WTC11 (cell line): ENCODE measurements at regions of chr20 and their contacts with region 1.

Region 1: GRCh38 chr20:63980806-63981728 is at the start of gene PRPF6:
- DNase-seq: peak; percentile 98
- ATAC-seq: peak; percentile 71
- H3K4me3 Mint-ChIP-seq: peak within 1 kb of the TSS; percentile 94
- H3K27ac Mint-ChIP-seq: peak within 1 kb of the TSS; percentile 93
- H3K4me1 Mint-ChIP-seq: peaks cover 21% of the 10 kb centered on the region
- H3K27me3 Mint-ChIP-seq: peaks cover 10% of the 10 kb centered on the region
- CTCF ChIP-seq: peak; percentile 60
- total RNA-seq, gene PRPF6: 79.4 to 84.6 TPM (median 80.5 TPM) in 3 replicates

Region 2: DNA sequence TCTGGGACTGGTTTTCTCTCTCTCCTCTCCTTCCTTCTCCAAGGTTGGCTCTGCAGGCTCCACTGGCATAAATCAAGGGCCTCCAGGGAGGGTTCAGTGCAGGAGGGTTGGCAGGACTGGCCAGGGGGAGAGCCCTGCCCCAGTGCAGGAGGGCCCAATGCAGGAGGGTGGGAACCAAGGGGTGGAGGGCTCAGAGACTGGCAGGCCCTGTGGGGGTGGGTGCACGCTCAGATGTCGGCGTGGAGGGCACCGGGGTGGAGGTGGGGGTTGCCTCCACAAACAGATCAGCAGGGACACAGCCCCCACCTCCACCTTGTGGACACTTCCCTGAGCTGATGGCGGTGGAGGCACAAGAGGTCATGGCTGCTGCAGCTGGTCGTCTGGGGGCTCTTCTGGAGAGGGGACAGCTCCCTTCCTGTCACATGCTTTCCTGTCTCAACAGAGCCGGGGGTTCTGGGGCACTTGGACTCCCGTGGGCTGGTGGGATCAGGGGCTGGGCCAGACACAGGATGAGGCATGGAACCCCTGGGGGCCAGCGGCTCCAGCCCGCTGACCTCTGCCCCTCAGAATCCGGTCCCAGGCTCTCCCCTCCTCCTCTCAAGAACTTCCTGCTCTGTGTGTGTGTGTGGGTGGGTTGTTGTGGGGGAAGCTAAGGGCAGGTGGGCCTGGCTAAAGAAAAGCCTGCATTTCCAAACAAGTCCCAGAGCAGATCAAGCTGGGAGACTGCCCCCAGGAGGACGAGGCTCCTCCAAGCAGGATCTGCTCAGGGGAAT is 122.5 kb before region 1 on chr20:
- CTCF ChIA-PET with region 1: interaction called, 12 read pairs
- POLR2A ChIA-PET with region 1: no interaction called
- DNase-seq: no peak
- ATAC-seq: peak; percentile 33
- H3K4me3 Mint-ChIP-seq: peak overlapping the region; percentile 43
- H3K27ac Mint-ChIP-seq: peak overlapping the region; percentile 86
- H3K4me1 Mint-ChIP-seq: peaks cover 47% of the 10 kb centered on the region
- H3K27me3 Mint-ChIP-seq: peaks cover 9% of the 10 kb centered on the region
- CTCF ChIP-seq: no peak

Region 3: GRCh38 chr20:64027981-64028685 is 47.1 kb after region 1 on chr20:
- CTCF ChIA-PET with region 1: interaction called, 11 read pairs
- POLR2A ChIA-PET with region 1: no interaction called
- DNase-seq: no peak
- ATAC-seq: no peak
- H3K4me3 Mint-ChIP-seq: no peak overlapping the region
- H3K27ac Mint-ChIP-seq: no peak overlapping the region
- H3K4me1 Mint-ChIP-seq: no peaks in the 10 kb centered on the region
- H3K27me3 Mint-ChIP-seq: no peaks in the 10 kb centered on the region
- CTCF ChIP-seq: no peak

Region 4: DNA sequence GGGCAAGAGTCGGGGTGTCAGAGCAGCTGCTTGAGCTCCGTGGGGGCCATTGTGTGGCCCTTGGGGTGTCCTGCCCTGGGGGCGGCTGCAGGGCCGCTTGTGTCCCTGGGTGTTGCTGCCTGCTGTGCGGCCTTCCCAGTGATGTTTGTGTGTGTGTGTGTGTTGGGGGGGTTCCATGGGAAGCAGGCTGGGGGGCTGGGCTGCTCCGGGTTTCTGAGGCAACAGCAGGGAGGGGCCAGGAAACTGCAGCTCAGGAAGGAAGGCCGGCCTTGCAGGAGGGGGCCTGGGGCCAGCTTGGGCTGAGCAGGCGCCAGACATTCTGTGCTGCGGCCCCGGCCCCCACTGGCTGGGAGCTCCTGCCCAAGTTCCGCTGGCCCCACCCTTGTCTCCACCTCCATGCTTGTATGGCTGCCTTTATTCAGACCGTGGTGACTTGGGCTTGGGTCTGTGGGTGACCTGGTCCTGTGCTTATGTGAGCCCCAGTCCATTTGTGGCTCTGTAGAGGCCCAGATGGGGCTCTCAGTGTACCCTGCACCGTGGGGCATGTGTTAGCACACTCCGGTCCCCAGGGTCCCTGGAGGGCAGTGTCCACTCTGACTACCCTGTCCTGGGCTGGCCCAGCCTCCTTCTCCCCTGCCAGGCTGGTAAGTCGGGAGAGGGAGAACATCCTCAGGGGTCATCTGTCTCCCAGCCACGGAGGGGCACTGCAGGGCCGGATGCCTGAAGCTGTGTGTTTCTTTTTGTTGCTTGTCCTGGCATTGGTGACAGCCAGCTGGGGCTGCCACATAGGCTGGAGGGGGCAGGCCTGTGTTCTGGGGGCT is 73.0 kb after region 1 on chr20:
- CTCF ChIA-PET with region 1: interaction called, 24 read pairs
- POLR2A ChIA-PET with region 1: interaction called, 3 read pairs
- DNase-seq: peak; percentile 56
- ATAC-seq: peak; percentile 20
- H3K4me3 Mint-ChIP-seq: no peak overlapping the region
- H3K27ac Mint-ChIP-seq: peak overlapping the region; percentile 74; the same call in 1 of the 2 replicates
- H3K4me1 Mint-ChIP-seq: peaks cover 22% of the 10 kb centered on the region
- H3K27me3 Mint-ChIP-seq: peaks cover 24% of the 10 kb centered on the region
- CTCF ChIP-seq: no peak

Region 5: GRCh38 chr20:64079273-64080012 is 98.4 kb after region 1 on chr20 and contains the start of gene RGS19:
- CTCF ChIA-PET with region 1: interaction called, 13 read pairs
- POLR2A ChIA-PET with region 1: no interaction called
- DNase-seq: peak; percentile 75
- ATAC-seq: peak; percentile 40
- H3K4me3 Mint-ChIP-seq: peak within 1 kb of the TSS; percentile 80
- H3K27ac Mint-ChIP-seq: no peak within 1 kb of the TSS
- H3K4me1 Mint-ChIP-seq: peaks cover 29% of the 10 kb centered on the region
- H3K27me3 Mint-ChIP-seq: peaks cover 35% of the 10 kb centered on the region
- CTCF ChIP-seq: no peak
- total RNA-seq, gene RGS19: 13.8 to 15.9 TPM (median 15.1 TPM) in 3 replicates